ENCODE measurements at regions of chr2 and their contacts with region 1.

Region 1: GRCh38 chr2:197042739-197043196 is 116.3 kb upstream of the PGAP1 start:
- DNase-seq: peak; percentile 3
- H3K4me3 Mint-ChIP-seq: no peak overlapping the region
- H3K27ac Mint-ChIP-seq: no peak overlapping the region
- H3K4me1 Mint-ChIP-seq: peaks cover 37% of the 10 kb centered on the region
- H3K27me3 Mint-ChIP-seq: no peaks in the 10 kb centered on the region

Region 2: DNA sequence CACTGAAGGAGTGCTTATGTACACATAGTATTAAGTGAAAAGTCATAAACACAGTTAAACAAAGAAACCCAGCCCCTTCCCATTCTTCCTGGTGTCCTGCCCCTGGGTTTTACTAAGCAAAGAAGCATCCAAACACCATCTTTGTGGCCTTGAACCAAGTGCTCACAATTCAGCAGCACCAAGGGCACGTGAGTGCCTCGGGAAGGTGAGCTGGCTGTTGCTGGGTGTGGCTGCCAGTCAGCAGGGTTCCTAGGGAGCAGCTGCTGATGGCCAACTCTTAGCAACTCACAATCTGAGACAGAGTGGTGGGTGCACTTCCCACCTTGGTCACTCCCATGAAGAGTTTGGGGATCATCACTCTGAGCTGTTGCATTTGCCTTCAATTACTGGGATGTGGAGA is 18.6 kb before region 1 on chr2:
- intact Hi-C with region 1: loop called (anchors 2 kb)
- DNase-seq: no peak
- H3K4me3 Mint-ChIP-seq: no peak overlapping the region
- H3K27ac Mint-ChIP-seq: peak overlapping the region; percentile 30
- H3K4me1 Mint-ChIP-seq: peaks cover 37% of the 10 kb centered on the region
- H3K27me3 Mint-ChIP-seq: no peaks in the 10 kb centered on the region

Region 3: GRCh38 chr2:197092431-197092830 is 49.7 kb after region 1 on chr2:
- intact Hi-C with region 1: loop called (anchors 1 kb)
- DNase-seq: no peak
- H3K4me3 Mint-ChIP-seq: no peak overlapping the region
- H3K27ac Mint-ChIP-seq: no peak overlapping the region
- H3K4me1 Mint-ChIP-seq: no peaks in the 10 kb centered on the region
- H3K27me3 Mint-ChIP-seq: no peaks in the 10 kb centered on the region